Activated B cell treated with CpG ODN at 0.5 μM for 24 hours (primary cell): ENCODE measurements at regions of chr10 and their contacts with region 1.

Region 1: GRCh38 chr10:59222788-59223187 is 46.3 kb downstream of the PHYHIPL start:
- DNase-seq: no peak
- ATAC-seq: no peak
- H3K4me3 Mint-ChIP-seq: no peak overlapping the region
- H3K27ac Mint-ChIP-seq: no peak overlapping the region
- H3K4me1 Mint-ChIP-seq: no peaks in the 10 kb centered on the region
- H3K27me3 Mint-ChIP-seq: peaks cover 5% of the 10 kb centered on the region
- CTCF ChIP-seq: no peak

Region 2: DNA sequence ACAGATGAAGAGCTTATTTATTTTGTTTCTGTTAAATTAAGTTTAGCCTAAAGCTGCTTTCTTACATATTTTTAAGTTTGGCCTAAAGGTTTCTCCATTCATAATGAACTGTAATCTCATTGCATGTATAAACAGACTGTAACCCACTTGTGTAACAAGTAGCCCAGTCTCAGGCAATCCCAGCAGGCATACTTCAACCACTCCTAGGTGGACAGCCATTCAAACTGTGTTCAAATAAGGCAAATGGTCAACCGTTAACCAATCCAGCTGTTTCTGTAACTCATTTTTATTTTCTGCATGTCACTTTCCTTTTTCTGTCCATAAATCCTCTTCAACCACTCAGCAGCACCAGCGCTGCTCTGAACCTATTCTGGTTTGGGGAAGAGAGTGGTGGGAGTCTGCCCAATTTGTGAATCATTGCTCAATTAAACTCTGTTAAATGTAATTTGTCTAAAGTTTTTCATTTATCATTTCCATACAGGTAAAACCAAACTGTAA is 10.4 kb before region 1 on chr10:
- CTCF ChIA-PET with region 1: no interaction called
- POLR2A ChIA-PET with region 1: no interaction called
- intact Hi-C with region 1: loop called (anchors 1 kb)
- DNase-seq: no peak
- ATAC-seq: no peak
- H3K4me3 Mint-ChIP-seq: no peak overlapping the region
- H3K27ac Mint-ChIP-seq: no peak overlapping the region
- H3K4me1 Mint-ChIP-seq: no peaks in the 10 kb centered on the region
- H3K27me3 Mint-ChIP-seq: no peaks in the 10 kb centered on the region
- CTCF ChIP-seq: no peak

Region 3: GRCh38 chr10:59265141-59265540 is 42.4 kb after region 1 on chr10:
- CTCF ChIA-PET with region 1: no interaction called
- POLR2A ChIA-PET with region 1: no interaction called
- intact Hi-C with region 1: no loop called
- DNase-seq: no peak
- ATAC-seq: no peak
- H3K4me3 Mint-ChIP-seq: no peak overlapping the region
- H3K27ac Mint-ChIP-seq: no peak overlapping the region
- H3K4me1 Mint-ChIP-seq: no peaks in the 10 kb centered on the region
- H3K27me3 Mint-ChIP-seq: no peaks in the 10 kb centered on the region
- CTCF ChIP-seq: no peak